ENCODE measurements at regions of chr1 and their contacts with region 1.

Region 1: DNA sequence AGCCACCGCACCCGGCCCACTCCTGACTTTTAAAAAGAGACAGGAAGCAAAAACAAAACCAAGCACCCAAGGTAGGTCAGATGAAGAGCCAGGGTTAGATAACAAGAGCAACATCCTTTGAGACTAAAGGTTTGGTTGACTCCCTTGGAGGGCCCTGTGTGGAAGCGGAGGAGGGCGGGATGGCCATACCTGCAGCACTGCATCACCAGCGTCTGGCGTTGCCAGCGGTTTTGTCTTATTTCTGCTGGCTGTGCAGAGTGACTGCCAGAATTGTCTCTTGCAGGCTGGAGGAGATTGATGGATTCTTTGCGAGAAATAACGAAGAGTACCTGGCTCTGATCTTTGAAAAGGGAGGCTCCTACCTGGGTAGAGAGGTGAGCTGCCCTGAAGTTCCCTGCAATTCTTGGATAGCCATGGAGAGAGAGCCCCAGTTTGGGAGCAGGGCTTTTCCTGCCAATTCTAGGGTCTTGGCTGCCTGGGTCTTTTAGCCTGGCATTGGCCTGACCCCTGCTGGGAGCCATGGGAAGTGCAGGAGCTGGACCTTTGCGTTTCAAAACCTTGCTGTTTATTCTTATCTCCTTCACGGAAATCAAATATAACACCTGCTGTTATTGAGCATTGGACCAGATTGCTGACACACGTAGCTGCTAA is 24.0 kb downstream of the QSOX1 start:
- DNase-seq: no peak
- H3K4me3 ChIP-seq: no peak overlapping the region
- CTCF ChIP-seq: peak; percentile 94

Region 2: DNA sequence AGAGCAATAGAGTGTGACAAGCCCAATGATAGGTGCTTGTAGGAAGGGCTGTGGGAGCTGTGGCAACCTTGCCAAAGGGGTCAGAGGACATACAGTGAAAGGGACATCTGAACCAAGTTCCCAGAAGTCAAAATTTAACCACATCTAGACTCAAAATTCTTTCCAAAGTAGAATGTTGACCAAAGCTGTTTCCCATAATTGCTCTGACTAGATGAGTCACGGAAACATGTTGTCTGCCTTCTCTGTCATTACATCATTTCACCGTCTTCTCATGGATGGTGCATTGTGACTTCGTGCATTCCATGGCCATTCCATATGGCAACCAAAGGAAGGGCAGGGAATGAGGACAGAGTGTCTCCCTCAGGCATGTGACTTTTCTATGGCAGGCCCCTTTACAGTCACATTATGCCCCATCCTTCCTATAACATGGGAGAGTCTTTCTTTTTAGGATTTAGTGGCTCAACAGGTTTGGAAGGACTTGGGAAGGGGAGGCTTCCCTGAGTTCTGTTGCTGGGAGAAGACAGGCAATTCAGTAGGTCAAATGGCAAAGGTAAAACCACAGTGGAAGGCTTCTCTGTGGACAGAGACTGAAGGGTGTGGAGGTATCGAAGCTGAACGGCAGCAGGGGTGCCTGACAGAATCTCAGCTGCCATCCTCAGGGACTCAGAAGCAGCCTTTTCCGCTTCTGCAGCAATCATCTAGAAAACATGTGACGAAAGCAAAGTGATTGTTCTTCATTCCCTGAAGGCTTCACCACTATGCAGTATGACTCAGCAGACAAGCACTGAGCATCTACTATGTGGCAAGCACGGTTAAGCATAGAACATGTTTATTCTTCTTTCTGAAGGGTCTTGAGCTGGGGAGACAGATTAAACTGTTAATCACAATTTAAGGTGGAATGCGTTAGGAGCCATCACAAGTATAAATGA is 627.6 kb before region 1 on chr1:
- CTCF ChIA-PET with region 1: no interaction called
- POLR2A ChIA-PET with region 1: no interaction called
- DNase-seq: peak; percentile 28
- H3K4me3 ChIP-seq: no peak overlapping the region
- CTCF ChIP-seq: no peak

Region 3: GRCh38 chr1:179867807-179868330 is 310.8 kb before region 1 on chr1:
- CTCF ChIA-PET with region 1: interaction called, 145 read pairs
- POLR2A ChIA-PET with region 1: interaction called, 3 read pairs
- DNase-seq: no peak
- H3K4me3 ChIP-seq: no peak overlapping the region
- CTCF ChIP-seq: peak; percentile 64

Region 4: GRCh38 chr1:179954493-179955297 is 223.9 kb before region 1 on chr1 and contains the start of gene CEP350:
- CTCF ChIA-PET with region 1: no interaction called
- POLR2A ChIA-PET with region 1: no interaction called
- DNase-seq: peak; percentile 96
- H3K4me3 ChIP-seq: peak within 1 kb of the TSS; percentile 95
- CTCF ChIP-seq: no peak

Region 5: GRCh38 chr1:180027949-180028445 is 150.6 kb before region 1 on chr1:
- CTCF ChIA-PET with region 1: interaction called, 18 read pairs
- POLR2A ChIA-PET with region 1: no interaction called
- DNase-seq: peak; percentile 65
- H3K4me3 ChIP-seq: no peak overlapping the region
- CTCF ChIP-seq: no peak

Region 6: DNA sequence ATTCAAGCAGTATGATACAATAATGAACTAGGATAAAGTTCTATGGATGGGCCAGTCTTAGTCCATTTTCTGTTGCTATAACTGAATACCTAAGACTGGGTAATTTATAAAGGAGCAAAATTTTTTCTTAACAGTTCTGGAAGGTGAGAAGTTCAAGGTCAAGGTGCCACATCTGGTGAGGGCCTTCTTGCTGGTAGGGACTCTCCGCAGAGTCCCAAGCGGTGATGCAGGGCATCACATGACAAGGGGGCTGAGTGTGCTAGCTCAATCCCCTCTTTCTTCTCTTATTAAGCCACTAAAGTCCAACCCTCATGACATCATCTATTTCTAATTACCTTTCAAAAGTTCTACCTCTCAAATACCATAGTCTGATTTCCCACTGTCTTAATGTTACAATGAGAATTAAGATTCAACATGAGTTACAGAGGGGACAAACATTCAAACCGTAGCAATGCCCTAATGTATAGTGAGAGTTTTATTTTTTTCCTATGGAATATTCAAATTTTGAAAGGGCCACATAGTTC is 116.1 kb before region 1 on chr1:
- CTCF ChIA-PET with region 1: interaction called, 13 read pairs
- POLR2A ChIA-PET with region 1: no interaction called
- DNase-seq: no peak
- H3K4me3 ChIP-seq: no peak overlapping the region
- CTCF ChIP-seq: no peak

Region 7: DNA sequence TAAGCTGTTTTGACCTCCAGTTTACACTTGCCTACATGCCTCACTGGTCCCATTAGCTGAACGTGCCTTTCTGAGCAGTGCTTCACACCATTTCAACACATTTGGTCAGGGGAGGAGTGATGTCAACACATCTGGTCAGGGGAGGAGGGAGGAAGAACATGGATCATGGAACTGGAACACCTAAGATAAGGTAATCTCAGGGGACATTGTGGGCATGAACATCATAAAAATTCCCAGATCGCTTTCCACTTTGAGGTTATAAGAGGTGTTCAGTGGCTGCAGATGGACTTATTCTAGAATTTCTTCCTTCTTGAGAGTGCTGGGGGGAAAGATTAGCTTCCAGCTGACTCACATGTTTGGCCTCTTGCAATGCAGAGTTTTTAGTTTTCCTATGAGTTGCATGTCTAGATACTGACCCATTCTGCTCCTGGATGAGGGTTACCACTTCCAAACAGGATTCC is 22.0 kb before region 1 on chr1:
- CTCF ChIA-PET with region 1: interaction called, 11 read pairs
- POLR2A ChIA-PET with region 1: no interaction called
- DNase-seq: no peak
- H3K4me3 ChIP-seq: peak overlapping the region; percentile 89
- CTCF ChIP-seq: no peak

Region 8: DNA sequence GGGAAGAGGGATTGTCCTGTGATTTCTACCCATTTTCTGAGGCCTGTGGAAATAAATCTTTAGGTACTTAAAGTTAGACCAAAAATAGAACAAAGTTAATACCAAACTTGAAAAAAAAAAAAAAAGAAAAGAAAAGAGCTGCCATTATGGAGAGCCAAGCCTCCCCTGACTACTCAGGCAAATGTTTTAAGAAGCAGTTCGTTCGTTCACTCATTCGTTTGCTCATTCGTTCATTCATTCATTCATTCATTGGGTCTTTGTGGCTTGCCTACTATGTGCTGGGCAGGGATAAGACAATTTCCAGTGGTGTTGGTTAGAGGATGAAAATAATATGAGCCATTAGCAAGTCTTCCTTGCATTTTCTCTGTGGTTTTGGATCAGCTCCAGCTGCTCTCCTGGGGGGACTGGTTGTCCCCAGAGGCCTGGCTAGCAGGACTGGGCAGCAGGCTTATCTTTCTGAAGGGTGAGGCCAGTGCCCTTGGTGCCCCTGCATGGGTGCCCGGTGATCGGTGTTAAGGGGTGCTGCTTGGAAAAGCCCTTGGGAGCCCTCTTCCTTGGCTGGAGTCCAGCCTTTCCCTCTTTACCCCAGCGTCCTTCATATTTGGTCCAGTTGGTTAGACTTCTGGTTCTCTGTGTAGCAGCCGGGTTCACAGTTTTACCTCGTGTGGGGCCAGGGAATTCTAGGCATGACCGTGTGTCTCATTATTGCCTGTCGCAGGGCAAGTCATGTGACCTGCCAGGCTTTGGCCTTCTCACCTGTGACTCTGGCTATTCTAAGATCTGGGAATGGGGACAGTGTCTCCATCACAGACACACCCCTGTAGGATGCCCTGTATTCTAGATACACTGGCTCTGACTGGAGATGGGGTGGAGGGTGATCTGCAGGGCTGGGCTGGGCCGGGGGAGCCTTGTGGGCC is 84.2 kb after region 1 on chr1:
- CTCF ChIA-PET with region 1: no interaction called
- POLR2A ChIA-PET with region 1: no interaction called
- DNase-seq: no peak
- H3K4me3 ChIP-seq: no peak overlapping the region
- CTCF ChIP-seq: no peak

Region 9: DNA sequence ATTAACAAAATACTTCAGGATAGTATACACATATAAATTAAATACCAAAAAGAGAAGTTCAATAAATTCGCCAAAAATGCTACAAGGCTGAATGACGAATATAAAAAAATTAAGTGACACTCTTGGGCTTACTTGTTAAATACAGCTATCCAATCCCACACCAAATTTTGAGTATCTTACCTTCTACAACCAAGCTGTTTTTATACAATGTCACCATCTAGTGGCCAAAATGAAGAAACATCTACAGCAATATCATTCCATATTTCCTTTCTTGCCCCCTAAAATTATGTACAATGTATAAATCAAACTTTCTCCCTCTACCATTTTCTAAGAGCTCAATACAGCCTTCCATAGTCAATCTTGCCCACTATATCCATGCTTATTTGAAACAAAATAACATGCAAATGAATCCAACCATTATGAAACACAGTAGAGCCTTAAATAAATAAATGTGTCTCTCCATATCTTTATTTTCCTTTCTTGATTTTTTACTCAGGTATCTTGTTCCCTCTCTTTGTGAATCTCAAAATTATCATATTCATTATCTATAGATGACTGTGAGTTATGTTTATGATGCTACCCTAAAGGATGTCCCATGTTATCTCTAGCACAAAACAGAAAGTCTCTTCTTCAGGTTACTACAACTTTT is 237.5 kb after region 1 on chr1:
- CTCF ChIA-PET with region 1: interaction called, 10 read pairs
- POLR2A ChIA-PET with region 1: no interaction called
- DNase-seq: no peak
- H3K4me3 ChIP-seq: no peak overlapping the region
- CTCF ChIP-seq: peak; percentile 33